ENCODE measurements at regions of chr3 and their contacts with region 1.

Region 1: DNA sequence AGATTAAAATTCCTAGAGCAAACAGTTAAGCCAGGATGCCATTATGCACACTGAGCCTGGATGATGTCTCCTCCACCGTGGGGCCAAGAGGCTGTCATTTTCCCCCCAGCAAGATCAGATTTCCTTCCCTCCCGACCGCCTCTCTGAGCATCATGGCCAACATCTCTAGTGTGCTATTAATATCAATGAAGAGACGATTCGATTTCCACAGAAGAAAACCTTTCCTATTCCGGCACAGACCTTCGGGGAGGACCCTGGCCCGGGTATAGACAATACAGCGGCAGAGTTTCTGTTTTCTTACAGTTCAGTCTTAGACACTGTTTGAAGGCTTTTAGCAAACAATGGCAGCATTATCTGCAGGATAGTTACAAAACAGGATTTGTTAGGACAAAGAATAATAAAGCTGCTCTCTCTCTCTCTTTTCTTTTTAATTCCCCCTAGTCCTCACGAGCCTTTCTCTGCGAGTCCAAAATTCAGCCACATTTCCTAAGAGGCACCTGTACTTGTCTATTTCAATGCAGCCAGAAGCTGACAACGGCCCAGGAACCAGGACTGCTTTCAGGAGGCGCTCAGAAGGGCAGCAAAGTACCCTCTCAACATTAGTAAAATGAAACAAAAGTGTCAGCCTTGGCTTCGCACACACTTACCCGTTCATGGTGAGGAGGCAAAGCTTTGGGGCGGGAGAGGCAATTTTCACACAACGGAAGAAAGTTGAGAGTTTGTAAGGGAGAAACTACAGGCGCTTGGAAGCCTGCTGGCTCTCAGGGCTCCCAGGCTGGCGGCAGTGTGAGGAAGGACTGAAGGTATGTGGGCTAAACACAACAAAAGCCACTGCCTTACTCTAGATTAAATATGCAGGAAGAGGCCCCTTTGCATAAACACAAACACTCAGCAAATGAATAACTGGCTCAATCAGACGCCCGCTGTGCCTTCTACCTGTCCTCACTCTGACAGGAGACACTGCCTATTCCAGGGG is 278.0 kb downstream of the FOXP1 start:
- DNase-seq: peak in 1 of 2 donors; percentile 25
- H3K4me3 ChIP-seq: peak overlapping the region; percentile 38 to 42
- H3K27ac ChIP-seq: peak overlapping the region; percentile 59 to 73
- H3K4me1 ChIP-seq: peaks cover 0 to 57% (median 17%) of the 10 kb centered on the region in 4 donors
- H3K27me3 ChIP-seq: no peaks in the 10 kb centered on the region
- CTCF ChIP-seq: no peak

Region 2: GRCh38 chr3:70550723-70551319 is 754.7 kb before region 1 on chr3:
- intact Hi-C with region 1: loop called (anchors 5 kb)
- DNase-seq: peak; percentile 66 to 80
- H3K4me3 ChIP-seq: no peak overlapping the region
- H3K27ac ChIP-seq: no peak overlapping the region
- H3K4me1 ChIP-seq: no peaks in the 10 kb centered on the region
- H3K27me3 ChIP-seq: no peaks in the 10 kb centered on the region
- CTCF ChIP-seq: peak; percentile 70 to 76

Region 3: GRCh38 chr3:70716832-70717231 is 588.7 kb before region 1 on chr3:
- intact Hi-C with region 1: loop called (anchors 10 kb)
- DNase-seq: peak in 1 of 2 donors; percentile 44
- H3K4me3 ChIP-seq: no peak overlapping the region
- H3K27ac ChIP-seq: no peak overlapping the region
- H3K4me1 ChIP-seq: peaks cover 0 to 8% (median 0%) of the 10 kb centered on the region in 4 donors
- H3K27me3 ChIP-seq: no peaks in the 10 kb centered on the region
- CTCF ChIP-seq: peak; percentile 59 to 67

Region 4: DNA sequence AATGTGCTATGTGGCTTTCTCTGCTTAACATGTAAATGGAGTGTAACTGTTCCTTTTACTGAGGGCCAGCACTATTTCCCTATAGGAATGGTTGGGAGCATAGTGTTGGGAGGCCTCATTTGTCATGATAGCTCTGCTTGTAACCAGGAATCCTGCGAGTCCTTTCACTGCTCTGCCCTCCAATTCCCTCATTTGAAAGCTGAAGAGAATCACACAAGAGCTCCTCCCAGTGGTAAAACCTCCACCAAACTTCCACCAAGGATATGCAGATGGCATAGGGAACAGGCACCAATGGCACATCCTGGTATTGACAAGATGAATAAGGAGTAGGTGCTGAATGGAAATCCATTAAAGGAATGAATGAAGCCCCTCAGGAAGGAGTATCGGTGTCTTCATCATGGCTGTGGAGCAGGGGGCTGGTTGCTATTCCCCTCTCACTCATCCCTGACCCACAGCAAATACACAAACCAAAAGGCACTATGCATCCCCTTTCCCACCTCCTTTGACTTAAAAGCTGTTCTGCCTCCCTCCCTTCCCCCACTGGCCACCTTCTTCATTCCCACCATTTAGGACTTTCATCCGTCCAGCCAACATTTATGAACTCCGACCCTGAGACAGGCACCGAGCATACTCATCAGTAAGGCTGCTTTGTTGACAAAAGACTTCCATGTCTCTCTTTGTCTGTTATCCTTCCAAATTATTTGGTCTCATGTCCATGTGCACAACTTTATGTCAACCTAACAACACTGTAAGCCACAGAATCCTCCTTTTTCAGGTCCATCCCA is 282.8 kb before region 1 on chr3:
- intact Hi-C with region 1: loop called (anchors 10 kb)
- DNase-seq: no peak
- H3K4me3 ChIP-seq: no peak overlapping the region
- H3K27ac ChIP-seq: peak overlapping the region in 1 of 2 donors; percentile 23
- H3K4me1 ChIP-seq: peaks cover 0 to 80% (median 37%) of the 10 kb centered on the region in 4 donors
- H3K27me3 ChIP-seq: no peaks in the 10 kb centered on the region
- CTCF ChIP-seq: no peak

Region 5: GRCh38 chr3:71069797-71070196 is 235.7 kb before region 1 on chr3:
- intact Hi-C with region 1: loop called (anchors 10 kb)
- DNase-seq: peak; percentile 83 to 84
- H3K4me3 ChIP-seq: no peak overlapping the region
- H3K27ac ChIP-seq: peak overlapping the region; percentile 94 to 99
- H3K4me1 ChIP-seq: peaks cover 0 to 91% (median 64%) of the 10 kb centered on the region in 4 donors
- H3K27me3 ChIP-seq: no peaks in the 10 kb centered on the region
- CTCF ChIP-seq: peak; percentile 45 to 46

Region 6: DNA sequence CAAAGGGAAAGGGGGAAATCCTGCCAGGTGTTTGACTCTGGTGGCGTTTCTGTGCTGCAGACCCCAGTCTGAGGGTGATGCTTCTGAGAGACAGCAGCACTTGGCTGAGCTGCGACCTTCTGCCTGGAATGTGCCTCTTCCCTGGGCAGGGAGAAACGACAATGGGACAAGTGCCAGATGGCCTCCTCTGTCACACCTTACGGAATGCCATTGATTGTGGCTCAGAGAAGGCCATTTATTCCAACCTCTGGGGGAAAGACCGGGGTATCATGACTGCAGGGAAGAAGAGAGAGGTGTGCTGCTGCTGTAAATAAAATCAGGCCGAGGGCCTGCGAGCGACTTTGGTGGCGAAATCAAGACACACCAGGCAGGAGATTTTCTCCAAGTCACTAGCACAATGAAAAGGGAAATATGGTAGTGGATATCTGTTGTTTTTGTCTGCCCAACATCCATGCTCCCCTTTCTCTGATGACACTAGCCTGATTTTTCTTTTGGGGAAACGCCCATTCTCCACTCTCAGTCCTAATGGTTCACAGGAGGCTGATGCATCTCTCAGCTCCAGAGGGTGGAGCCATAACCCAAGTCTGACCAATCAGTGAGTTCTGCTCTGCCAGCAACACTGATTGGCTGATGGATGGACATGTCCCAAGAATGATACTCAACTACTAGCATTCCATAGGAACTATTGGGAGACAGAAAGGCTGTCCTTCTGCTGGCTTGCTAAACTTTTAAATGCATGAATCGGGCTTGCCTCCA is 58.1 kb before region 1 on chr3:
- intact Hi-C with region 1: loop called (anchors 10 kb)
- DNase-seq: no peak
- H3K4me3 ChIP-seq: no peak overlapping the region
- H3K27ac ChIP-seq: peak overlapping the region; percentile 80 to 86
- H3K4me1 ChIP-seq: peaks cover 0 to 49% (median 30%) of the 10 kb centered on the region in 4 donors
- H3K27me3 ChIP-seq: no peaks in the 10 kb centered on the region
- CTCF ChIP-seq: no peak

Measured in tibial artery (tissue), 4 donors.